ENCODE measurements at regions of chr4 and their contacts with region 1.

Region 1: DNA sequence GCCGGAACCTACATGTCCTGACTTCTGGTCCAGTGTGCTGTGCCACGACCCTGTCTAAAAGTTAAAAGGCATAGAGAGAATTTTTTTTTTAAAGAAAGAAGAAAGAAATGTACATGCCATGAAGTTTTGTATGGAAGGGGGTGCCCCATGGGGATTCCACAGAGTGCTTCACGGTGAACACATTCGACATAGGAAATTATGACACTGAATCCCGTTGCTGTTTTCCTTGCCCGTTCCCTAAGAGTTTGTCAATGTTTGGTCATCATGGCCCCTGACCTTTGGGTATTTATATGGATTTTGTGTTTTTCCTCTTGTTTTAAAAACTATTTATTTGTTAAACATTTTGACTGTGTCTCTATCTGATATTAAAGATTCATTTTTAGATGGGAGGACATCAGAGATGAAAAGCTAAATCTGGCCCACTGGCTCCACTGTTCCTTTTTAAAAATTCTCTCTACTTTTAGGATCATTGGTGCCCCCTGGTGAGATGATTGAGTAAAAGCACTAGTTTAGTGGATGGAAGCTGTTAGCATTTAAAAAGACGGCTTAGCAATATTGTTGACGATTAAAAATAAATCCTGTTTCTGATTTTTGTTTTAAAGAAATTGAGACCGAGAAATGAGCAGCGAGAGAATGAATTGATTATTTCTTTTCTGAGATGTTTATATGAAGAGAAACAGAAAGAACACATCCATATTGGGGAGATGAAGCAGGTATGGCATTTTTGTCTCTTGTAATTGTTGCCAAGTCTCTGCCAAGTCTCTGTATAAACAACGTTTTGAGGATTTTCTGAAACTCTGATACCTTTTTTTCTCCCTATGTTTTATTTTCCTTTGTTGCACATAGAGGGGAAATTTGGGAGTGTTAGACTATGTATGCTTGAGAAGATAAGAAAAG is 75.0 kb downstream of the PTTG2 start:
- DNase-seq: no peak
- H3K4me3 Mint-ChIP-seq: no peak overlapping the region
- H3K27ac Mint-ChIP-seq: no peak overlapping the region
- H3K4me1 Mint-ChIP-seq: no peaks in the 10 kb centered on the region
- H3K27me3 Mint-ChIP-seq: no peaks in the 10 kb centered on the region

Region 2: DNA sequence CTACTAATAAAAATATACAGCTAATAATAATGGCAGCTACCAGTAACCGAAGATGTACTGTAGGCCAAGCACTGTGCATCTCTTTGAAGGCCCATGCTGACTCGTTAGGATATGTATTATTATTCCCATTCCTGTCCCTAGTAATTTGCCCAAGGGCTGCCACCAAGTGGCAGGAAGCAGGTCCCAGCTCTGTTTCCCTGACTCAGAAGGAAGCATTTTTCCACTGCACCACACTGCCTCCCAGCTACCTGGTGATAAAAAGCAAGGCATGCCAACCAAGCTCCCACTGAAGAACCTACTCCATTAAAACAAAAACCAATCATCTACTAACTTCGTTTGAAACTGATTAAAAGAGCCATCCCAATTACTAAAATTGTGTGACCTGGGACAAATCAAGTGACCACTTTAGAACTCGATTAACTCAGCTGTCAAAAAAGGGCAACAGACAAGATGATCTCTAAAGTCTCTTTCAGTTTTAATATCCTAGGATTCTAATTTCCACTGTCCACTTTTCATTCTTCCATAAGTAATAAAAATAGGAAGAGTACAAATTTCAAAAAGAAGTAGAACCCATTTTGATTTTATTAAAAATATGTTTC is 233.1 kb before region 1 on chr4:
- CTCF ChIA-PET with region 1: interaction called, 39 read pairs
- POLR2A ChIA-PET with region 1: interaction called, 3 read pairs
- intact Hi-C with region 1: loop called (anchors 1 kb)
- DNase-seq: no peak
- H3K4me3 Mint-ChIP-seq: no peak overlapping the region
- H3K27ac Mint-ChIP-seq: no peak overlapping the region
- H3K4me1 Mint-ChIP-seq: no peaks in the 10 kb centered on the region
- H3K27me3 Mint-ChIP-seq: no peaks in the 10 kb centered on the region